Activated CD4-positive, alpha-beta T cell treated with anti-CD3 and anti-CD28 coated beads, Interleukin-2, amount 10 ng/mL, durations not matched to agents 7 days and 5 days (primary cell): ENCODE measurements at regions of chr11 and their contacts with region 1.

Region 1: GRCh38 chr11:126480410-126481302 is 125.2 kb downstream of the ST3GAL4 start:
- DNase-seq: peak; percentile 79
- H3K4me3 Mint-ChIP-seq: peak overlapping the region; percentile 41
- H3K27ac Mint-ChIP-seq: peak overlapping the region; percentile 90
- H3K4me1 Mint-ChIP-seq: peaks cover 27% of the 10 kb centered on the region
- H3K27me3 Mint-ChIP-seq: peaks cover 1% of the 10 kb centered on the region

Region 2: DNA sequence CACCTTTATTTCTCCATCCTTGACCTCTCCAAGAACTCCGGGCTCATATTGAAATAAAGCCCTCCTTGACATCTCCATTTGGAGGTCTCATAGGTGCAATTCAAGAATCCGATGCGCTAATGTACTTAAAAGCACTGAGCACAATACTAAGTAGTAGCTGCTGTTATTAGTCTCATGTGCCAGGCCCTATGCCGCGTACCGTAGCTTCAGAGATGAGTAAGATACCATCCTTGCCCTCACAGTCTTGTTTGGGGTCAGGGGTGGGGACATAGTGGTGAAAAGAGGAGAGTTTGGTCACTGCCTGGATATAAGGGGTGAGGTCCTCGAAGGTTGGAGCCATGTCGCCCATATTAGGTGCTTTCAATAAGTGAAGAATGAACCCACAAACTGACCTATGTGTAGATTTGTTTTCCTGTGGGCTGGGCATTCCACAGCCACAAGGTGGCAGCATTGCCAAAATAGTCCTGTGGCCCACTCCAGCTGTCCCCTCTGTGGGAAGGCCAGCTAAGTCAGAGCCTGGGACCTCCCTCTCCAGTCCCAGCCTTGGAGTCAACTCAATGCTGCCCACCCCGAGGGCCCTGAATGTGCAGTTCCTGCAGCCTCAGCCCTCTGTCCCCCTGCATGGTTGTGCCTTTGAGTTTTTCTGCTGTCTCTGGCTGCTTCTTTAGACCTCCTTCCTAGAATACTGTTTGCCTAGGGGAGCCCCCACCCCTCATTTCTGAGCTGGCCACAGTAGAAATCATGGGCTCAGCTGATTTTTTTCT is 170.2 kb before region 1 on chr11:
- CTCF ChIA-PET with region 1: interaction called, 10 read pairs
- POLR2A ChIA-PET with region 1: no interaction called
- DNase-seq: peak; percentile 64
- H3K4me3 Mint-ChIP-seq: no peak overlapping the region
- H3K27ac Mint-ChIP-seq: peak overlapping the region; percentile 5
- H3K4me1 Mint-ChIP-seq: peaks cover 30% of the 10 kb centered on the region
- H3K27me3 Mint-ChIP-seq: no peaks in the 10 kb centered on the region

Region 3: GRCh38 chr11:126378763-126379162 is 101.9 kb before region 1 on chr11:
- CTCF ChIA-PET with region 1: no interaction called
- POLR2A ChIA-PET with region 1: no interaction called
- DNase-seq: no peak
- H3K4me3 Mint-ChIP-seq: no peak overlapping the region
- H3K27ac Mint-ChIP-seq: no peak overlapping the region
- H3K4me1 Mint-ChIP-seq: no peaks in the 10 kb centered on the region
- H3K27me3 Mint-ChIP-seq: no peaks in the 10 kb centered on the region

Region 4: GRCh38 chr11:126443120-126443519 is 37.5 kb before region 1 on chr11:
- CTCF ChIA-PET with region 1: interaction called, 11 read pairs
- POLR2A ChIA-PET with region 1: no interaction called
- DNase-seq: no peak
- H3K4me3 Mint-ChIP-seq: no peak overlapping the region
- H3K27ac Mint-ChIP-seq: no peak overlapping the region
- H3K4me1 Mint-ChIP-seq: peaks cover 4% of the 10 kb centered on the region
- H3K27me3 Mint-ChIP-seq: peaks cover 15% of the 10 kb centered on the region

Region 5: GRCh38 chr11:126468102-126468521 is 12.5 kb before region 1 on chr11:
- CTCF ChIA-PET with region 1: interaction called, 35 read pairs
- POLR2A ChIA-PET with region 1: no interaction called
- DNase-seq: no peak
- H3K4me3 Mint-ChIP-seq: no peak overlapping the region
- H3K27ac Mint-ChIP-seq: peak overlapping the region; percentile 5
- H3K4me1 Mint-ChIP-seq: peaks cover 29% of the 10 kb centered on the region
- H3K27me3 Mint-ChIP-seq: peaks cover under 1% of the 10 kb centered on the region

Region 6: GRCh38 chr11:126502159-126502558 is 21.5 kb after region 1 on chr11:
- CTCF ChIA-PET with region 1: interaction called, 12 read pairs
- POLR2A ChIA-PET with region 1: interaction called, 3 read pairs
- DNase-seq: no peak
- H3K4me3 Mint-ChIP-seq: no peak overlapping the region
- H3K27ac Mint-ChIP-seq: no peak overlapping the region
- H3K4me1 Mint-ChIP-seq: no peaks in the 10 kb centered on the region
- H3K27me3 Mint-ChIP-seq: peaks cover 20% of the 10 kb centered on the region

Region 7: DNA sequence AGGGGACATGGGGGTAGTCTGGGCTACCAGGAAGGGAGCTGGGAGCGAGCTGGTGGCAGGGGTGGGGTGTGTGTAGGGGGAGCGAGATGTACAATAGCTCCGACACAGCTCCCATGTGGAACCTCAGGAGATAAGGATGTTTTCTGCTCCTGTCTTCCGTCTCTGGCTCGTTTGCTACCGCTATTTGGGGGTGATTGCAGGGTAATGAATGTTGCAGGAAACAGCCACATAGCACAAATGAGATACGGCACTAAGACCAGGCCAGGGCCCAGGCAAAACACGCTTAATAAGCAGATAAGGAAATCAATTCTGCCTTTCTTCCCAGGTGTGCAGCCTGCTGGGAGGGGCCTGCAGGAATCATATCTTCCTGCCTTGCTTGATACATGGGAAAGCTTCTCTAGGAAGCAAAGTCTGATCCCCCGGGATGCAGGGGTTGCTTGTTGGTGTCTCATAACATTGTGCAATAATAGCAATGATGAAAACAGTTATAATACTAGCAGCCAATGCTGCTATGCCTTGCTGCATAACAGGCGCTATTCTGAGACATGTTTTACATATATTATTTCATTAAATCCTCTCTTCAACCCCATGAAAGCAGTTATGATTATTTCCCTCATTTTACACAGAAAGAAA is 33.5 kb after region 1 on chr11:
- CTCF ChIA-PET with region 1: no interaction called
- POLR2A ChIA-PET with region 1: no interaction called
- DNase-seq: no peak
- H3K4me3 Mint-ChIP-seq: no peak overlapping the region
- H3K27ac Mint-ChIP-seq: no peak overlapping the region
- H3K4me1 Mint-ChIP-seq: no peaks in the 10 kb centered on the region
- H3K27me3 Mint-ChIP-seq: no peaks in the 10 kb centered on the region

Region 8: DNA sequence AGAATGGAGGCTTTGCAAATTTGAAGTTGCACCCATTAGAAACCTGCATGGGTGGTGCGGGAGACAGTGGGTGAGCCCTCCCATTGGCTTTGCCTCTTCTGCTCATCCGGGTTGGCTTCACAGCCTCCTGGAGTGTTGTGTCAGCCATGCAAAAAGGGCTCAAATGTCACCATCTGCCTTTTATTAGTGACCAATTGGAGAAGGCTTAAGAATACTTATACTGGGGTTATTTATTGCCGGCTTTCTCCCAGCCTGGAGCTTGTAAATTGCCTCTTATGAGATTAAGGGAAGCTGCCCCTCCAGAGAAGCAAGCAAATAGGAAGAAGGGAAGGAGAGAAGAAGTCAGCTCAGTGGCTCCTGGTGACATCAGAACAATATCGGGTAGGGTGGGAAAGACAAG is 57.4 kb after region 1 on chr11:
- CTCF ChIA-PET with region 1: no interaction called
- POLR2A ChIA-PET with region 1: no interaction called
- DNase-seq: no peak
- H3K4me3 Mint-ChIP-seq: no peak overlapping the region
- H3K27ac Mint-ChIP-seq: no peak overlapping the region
- H3K4me1 Mint-ChIP-seq: no peaks in the 10 kb centered on the region
- H3K27me3 Mint-ChIP-seq: peaks cover 2% of the 10 kb centered on the region